Motor neuron (in vitro differentiated cells): ENCODE measurements at regions of chr3 and their contacts with region 1.

Region 1: DNA sequence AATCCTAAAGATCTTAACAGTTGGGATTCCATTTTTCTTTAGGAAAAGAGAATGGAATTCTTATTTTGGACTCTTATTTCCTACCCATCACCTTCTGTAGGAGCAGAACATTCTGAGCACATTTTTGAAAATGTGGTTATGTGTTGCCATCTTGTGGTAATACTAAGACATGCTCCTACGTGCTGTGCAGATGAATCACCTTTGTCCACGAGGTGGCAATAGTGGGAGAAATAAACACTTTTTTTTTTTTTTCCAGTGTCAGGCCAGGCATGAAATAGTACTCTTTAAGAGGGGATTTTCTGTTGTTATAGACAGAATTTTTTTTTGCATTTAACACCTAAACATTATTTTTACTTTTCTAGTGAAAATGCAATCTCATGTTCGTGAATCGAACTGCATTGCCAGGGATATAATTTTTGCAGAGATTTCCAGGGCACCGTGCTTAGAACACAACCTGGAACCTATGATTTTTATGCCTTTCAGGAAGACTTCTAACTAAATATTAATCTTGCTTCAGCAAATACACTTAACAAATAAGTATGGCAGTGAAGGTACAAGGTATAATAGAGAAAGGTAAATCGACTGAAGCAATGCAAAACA is 196.6 kb downstream of the GAP43 start:
- ATAC-seq: peak; percentile 87 to 98 (median 93)
- H3K4me3 ChIP-seq: no peak overlapping the region
- H3K27ac ChIP-seq: no peak overlapping the region
- H3K4me1 ChIP-seq: no peaks in the 10 kb centered on the region

Region 2: GRCh38 chr3:114152519-114153151 is 1667.2 kb before region 1 on chr3:
- in situ Hi-C with region 1: loop called in 1 of 9 experiments (anchors 25 kb)
- ATAC-seq: peak; percentile 88 to 98 (median 95)
- H3K4me3 ChIP-seq: peak overlapping the region; percentile 16 to 29 (median 20)
- H3K27ac ChIP-seq: no peak overlapping the region
- H3K4me1 ChIP-seq: peaks cover 18 to 19% of the 10 kb centered on the region in 2 donors

Region 3: GRCh38 chr3:114674036-114674435 is 1145.8 kb before region 1 on chr3:
- in situ Hi-C with region 1: no loop called
- ATAC-seq: peak in 4 of 8 experiments; percentile 13 to 46 (median 33)
- H3K4me3 ChIP-seq: no peak overlapping the region
- H3K27ac ChIP-seq: peak overlapping the region; percentile 42 to 88
- H3K4me1 ChIP-seq: peaks cover 27 to 35% of the 10 kb centered on the region in 2 donors

Region 4: GRCh38 chr3:114827495-114827894 is 992.4 kb before region 1 on chr3:
- in situ Hi-C with region 1: loop called in 1 of 9 experiments (anchors 25 kb)
- ATAC-seq: peak in 4 of 8 experiments; percentile 57 to 88 (median 82)
- H3K4me3 ChIP-seq: no peak overlapping the region
- H3K27ac ChIP-seq: no peak overlapping the region
- H3K4me1 ChIP-seq: no peaks in the 10 kb centered on the region

Region 5: DNA sequence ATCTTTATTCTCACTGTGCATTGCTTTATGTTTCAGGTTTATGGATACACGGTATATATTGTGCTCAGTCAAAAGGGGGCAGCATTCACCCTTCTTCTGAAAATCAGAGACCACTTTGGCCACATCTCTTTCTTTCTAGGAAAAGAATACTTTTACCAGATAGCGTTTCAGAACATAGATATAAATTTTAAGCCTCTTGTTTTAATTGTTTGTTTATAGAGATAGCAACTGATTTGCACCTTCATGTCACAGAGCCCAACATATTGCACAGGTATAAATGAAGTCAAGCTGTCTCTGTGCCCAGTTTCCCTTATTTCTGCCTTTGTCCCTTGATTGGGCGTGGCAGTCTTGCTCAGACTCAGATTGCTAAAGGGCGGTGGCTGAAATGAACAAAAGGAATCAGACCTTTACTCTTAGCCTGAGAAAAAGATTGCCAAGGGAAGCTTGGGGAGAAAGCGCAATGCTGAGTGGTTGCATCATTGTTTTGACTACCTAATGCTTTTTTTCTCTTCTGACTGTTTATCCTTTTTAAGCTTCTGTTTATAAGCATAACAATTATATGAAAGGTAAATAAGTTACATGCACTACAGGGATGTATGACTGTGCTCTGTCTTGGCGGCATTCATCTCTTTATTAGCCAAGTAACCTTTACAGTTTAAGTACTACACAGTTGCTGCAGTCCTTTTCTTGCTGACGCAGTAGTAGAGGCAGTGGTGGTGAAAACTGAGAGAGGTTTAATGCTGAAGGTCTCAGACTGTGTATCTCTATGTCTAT is 602.0 kb before region 1 on chr3:
- in situ Hi-C with region 1: loop called in 4 of 9 experiments (anchors 25 kb)
- ATAC-seq: peak; percentile 84 to 95 (median 89)
- H3K4me3 ChIP-seq: no peak overlapping the region
- H3K27ac ChIP-seq: peak overlapping the region in 1 of 2 donors; percentile 6
- H3K4me1 ChIP-seq: peaks cover 17 to 20% of the 10 kb centered on the region in 2 donors

Region 6: GRCh38 chr3:116757315-116757714 is 937.4 kb after region 1 on chr3:
- in situ Hi-C with region 1: loop called in 1 of 9 experiments (anchors 10 kb)
- ATAC-seq: no peak
- H3K4me3 ChIP-seq: no peak overlapping the region
- H3K27ac ChIP-seq: no peak overlapping the region
- H3K4me1 ChIP-seq: peaks cover 0 to 4% of the 10 kb centered on the region in 2 donors